A549 (cell line): ENCODE measurements at regions of chr6 and their contacts with region 1.

Region 1: DNA sequence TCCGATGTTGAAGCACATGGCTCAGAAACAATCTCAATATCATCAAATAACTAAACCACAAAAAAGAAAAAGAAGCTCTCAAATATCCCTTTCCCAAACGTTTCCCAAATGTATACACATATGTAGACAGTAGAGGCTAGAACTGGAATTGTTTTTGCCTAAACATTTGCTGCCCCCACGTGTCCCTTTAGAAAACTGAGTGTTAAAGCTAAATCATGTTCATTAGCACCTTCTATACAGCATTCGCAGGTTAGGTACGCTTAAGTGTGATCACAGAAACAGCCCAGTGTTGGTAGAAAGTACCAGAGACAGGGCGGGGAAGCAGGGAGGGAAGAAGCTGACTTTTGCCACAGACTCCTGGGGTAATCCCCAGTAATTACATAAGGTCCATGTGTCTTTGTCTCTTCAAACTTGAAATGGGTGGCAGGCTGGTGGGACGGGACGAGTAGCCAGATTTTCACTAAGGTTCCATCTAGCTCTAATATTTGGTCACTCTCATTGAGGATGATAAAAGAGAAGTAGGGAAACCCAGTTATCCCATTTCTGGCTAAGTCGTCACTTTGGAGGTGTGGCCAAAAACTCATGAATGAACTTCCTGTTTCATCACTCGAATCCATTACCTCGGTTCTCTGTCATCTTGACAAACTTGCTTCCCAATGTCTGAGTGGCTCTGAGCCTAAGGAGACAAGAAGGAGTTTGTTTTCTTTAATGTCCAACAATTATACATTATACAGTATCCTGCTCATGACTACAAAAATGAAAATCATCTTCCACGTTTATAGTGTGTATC is 15.0 kb upstream of the TFAP2A start:
- DNase-seq: peak in 1 of 2 experiments; percentile 64
- ATAC-seq: peak; percentile 77 to 85; a peak in 5 of 6 replicates
- H3K4me3 ChIP-seq: no peak overlapping the region
- H3K27ac ChIP-seq: peak overlapping the region; percentile 38 to 74; a peak in 4 of 6 replicates
- H3K4me1 ChIP-seq: peaks cover 33% of the 10 kb centered on the region
- CTCF ChIP-seq: peak; percentile 75
- EP300 ChIP-seq: no peak
- POLR2A ChIP-seq: no peak
- RAD21 ChIP-seq: peak; percentile 83 to 88

Region 2: DNA sequence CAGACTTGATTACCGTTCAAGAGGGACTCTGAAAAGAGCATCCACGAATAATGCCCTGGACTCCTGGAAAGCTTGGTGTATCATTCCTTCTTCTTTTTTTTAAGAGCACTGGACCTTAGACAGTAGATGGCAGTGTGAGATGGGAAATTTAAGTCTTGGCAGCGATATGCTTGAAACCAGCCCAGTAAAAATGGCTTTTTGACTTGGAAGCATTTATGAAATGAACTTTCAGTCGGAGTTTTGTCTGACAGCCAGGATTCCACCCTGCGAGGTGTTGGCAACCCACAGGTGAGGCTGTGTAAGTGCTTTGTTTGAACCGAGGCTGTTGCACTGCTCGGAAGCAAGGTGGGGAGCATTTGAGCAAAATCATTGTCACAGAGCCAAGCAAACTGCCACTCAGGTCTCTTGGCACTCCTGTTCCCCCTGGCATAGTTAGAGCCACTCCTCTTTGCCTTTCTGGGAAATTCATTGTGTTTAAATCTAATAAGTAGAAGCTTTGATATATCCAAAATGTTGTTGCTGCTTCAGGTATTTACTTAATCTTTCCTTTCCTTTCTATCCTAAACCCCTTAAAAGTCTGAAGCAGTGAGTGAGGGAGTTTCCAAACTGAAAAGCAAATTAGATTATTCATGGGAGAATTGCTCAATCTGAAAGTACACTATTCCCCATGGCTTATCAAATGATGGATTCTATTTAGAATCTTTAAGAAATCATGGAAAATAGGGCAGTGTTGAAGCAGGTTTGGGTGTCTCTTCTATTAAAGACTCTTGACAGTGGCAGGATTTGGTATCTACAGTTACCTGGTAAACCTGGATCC is 1721.7 kb before region 1 on chr6:
- CTCF ChIA-PET with region 1: interaction called, 14 read pairs
- POLR2A ChIA-PET with region 1: no interaction called
- DNase-seq: peak; percentile 6 to 37
- ATAC-seq: peak; percentile 60 to 66; a peak in 3 of 6 replicates
- H3K4me3 ChIP-seq: no peak overlapping the region
- H3K27ac ChIP-seq: no peak overlapping the region
- H3K4me1 ChIP-seq: no peaks in the 10 kb centered on the region
- CTCF ChIP-seq: peak; percentile 49
- EP300 ChIP-seq: no peak
- POLR2A ChIP-seq: no peak
- RAD21 ChIP-seq: peak; percentile 49 to 53

Region 3: GRCh38 chr6:8983188-8983688 is 1446.6 kb before region 1 on chr6:
- CTCF ChIA-PET with region 1: interaction called, 15 read pairs
- POLR2A ChIA-PET with region 1: no interaction called
- DNase-seq: peak; percentile 27 to 55
- ATAC-seq: peak; percentile 92 to 96
- H3K4me3 ChIP-seq: no peak overlapping the region
- H3K27ac ChIP-seq: no peak overlapping the region
- H3K4me1 ChIP-seq: peaks cover 7% of the 10 kb centered on the region; the same call in 1 of the 3 replicates
- CTCF ChIP-seq: peak; percentile 80
- EP300 ChIP-seq: no peak
- POLR2A ChIP-seq: no peak
- RAD21 ChIP-seq: peak; percentile 89 to 90

Region 4: DNA sequence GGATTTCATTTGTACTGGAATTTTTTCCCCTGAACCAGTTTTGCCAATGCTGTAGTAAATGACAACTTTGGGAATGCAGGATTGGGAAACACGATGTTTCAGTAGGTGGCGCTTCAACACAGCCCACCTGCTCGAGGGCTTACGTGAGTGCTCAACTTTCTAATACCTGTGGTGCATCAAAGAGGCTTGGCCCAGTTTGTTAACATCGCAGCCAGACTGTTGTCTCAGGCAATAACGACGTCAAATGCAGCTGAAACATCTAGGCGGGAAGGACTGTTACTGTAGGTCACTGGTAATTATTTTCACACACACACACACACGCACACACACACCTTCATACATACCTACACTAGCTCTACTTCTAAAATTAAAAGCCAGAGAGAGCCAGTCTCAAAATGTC is 1179.0 kb before region 1 on chr6:
- CTCF ChIA-PET with region 1: interaction called, 10 read pairs
- POLR2A ChIA-PET with region 1: no interaction called
- DNase-seq: peak in 1 of 2 experiments; percentile 64
- ATAC-seq: peak; percentile 77 to 80; a peak in 5 of 6 replicates
- H3K4me3 ChIP-seq: no peak overlapping the region
- H3K27ac ChIP-seq: no peak overlapping the region
- H3K4me1 ChIP-seq: peaks cover 11% of the 10 kb centered on the region; the same call in 2 of the 3 replicates
- CTCF ChIP-seq: peak; percentile 67
- EP300 ChIP-seq: no peak
- POLR2A ChIP-seq: no peak
- RAD21 ChIP-seq: peak; percentile 85 to 87

Region 5: GRCh38 chr6:10465629-10466504 is 36.0 kb after region 1 on chr6:
- CTCF ChIA-PET with region 1: interaction called, 10 read pairs
- POLR2A ChIA-PET with region 1: no interaction called
- DNase-seq: peak; percentile 33 to 72
- ATAC-seq: peak; percentile 73 to 85; a peak in 5 of 6 replicates
- H3K4me3 ChIP-seq: no peak overlapping the region
- H3K27ac ChIP-seq: peak overlapping the region; percentile 70 to 81
- H3K4me1 ChIP-seq: peaks cover 27% of the 10 kb centered on the region
- CTCF ChIP-seq: peak; percentile 63
- EP300 ChIP-seq: no peak
- POLR2A ChIP-seq: no peak; the same call in 1 of the 2 replicates
- RAD21 ChIP-seq: peak; percentile 57 to 67

Region 6: GRCh38 chr6:10505529-10505928 is 75.7 kb after region 1 on chr6:
- CTCF ChIA-PET with region 1: no interaction called
- POLR2A ChIA-PET with region 1: no interaction called
- DNase-seq: peak; percentile 38 to 82
- ATAC-seq: peak; percentile 97 to 99
- H3K4me3 ChIP-seq: no peak overlapping the region
- H3K27ac ChIP-seq: peak overlapping the region; percentile 55 to 63; a peak in 4 of 6 replicates
- H3K4me1 ChIP-seq: peaks cover 23% of the 10 kb centered on the region
- CTCF ChIP-seq: no peak; the same call in 2 of the 3 replicates
- EP300 ChIP-seq: peak in 1 of 2 experiments; percentile 64; a peak in 2 of 5 replicates
- POLR2A ChIP-seq: no peak
- RAD21 ChIP-seq: peak; percentile 4 to 24; a peak in 1 of 5 replicates